ENCODE measurements at regions of chr2 and their contacts with region 1.

Region 1: GRCh38 chr2:23824777-23825212 is 102.1 kb downstream of the ATAD2B start:
- DNase-seq: peak; percentile 34
- ATAC-seq: peak; percentile 75
- H3K4me3 ChIP-seq: no peak overlapping the region
- H3K27ac ChIP-seq: no peak overlapping the region; the same call in 1 of the 2 replicates
- H3K4me1 ChIP-seq: peaks cover 14% of the 10 kb centered on the region
- H3K27me3 ChIP-seq: no peaks in the 10 kb centered on the region
- CTCF ChIP-seq: peak; percentile 59 to 67 (median 64)
- EP300 ChIP-seq: no peak
- POLR2A ChIP-seq: no peak
- RAD21 ChIP-seq: peak; percentile 79

Region 2: GRCh38 chr2:23835988-23836387 is 11.2 kb after region 1 on chr2:
- CTCF ChIA-PET with region 1: interaction called, 17 read pairs
- POLR2A ChIA-PET with region 1: interaction called, 5 read pairs
- RAD21 ChIA-PET with region 1: interaction called, 5 read pairs
- SMC1A ChIA-PET with region 1: interaction called, 14 read pairs
- in situ Hi-C with region 1: no loop called
- intact Hi-C with region 1: no loop called
- DNase-seq: no peak
- ATAC-seq: no peak
- H3K4me3 ChIP-seq: no peak overlapping the region
- H3K27ac ChIP-seq: no peak overlapping the region
- H3K4me1 ChIP-seq: no peaks in the 10 kb centered on the region
- H3K27me3 ChIP-seq: no peaks in the 10 kb centered on the region
- CTCF ChIP-seq: no peak
- EP300 ChIP-seq: no peak
- POLR2A ChIP-seq: no peak
- RAD21 ChIP-seq: no peak

Region 3: GRCh38 chr2:23859983-23860382 is 35.2 kb after region 1 on chr2:
- CTCF ChIA-PET with region 1: interaction called, 13 read pairs
- POLR2A ChIA-PET with region 1: no interaction called
- RAD21 ChIA-PET with region 1: interaction called, 4 read pairs
- SMC1A ChIA-PET with region 1: interaction called, 7 read pairs
- in situ Hi-C with region 1: no loop called
- intact Hi-C with region 1: no loop called
- DNase-seq: no peak
- ATAC-seq: no peak
- H3K4me3 ChIP-seq: no peak overlapping the region
- H3K27ac ChIP-seq: no peak overlapping the region
- H3K4me1 ChIP-seq: peaks cover 10% of the 10 kb centered on the region
- H3K27me3 ChIP-seq: no peaks in the 10 kb centered on the region
- CTCF ChIP-seq: no peak
- EP300 ChIP-seq: no peak
- POLR2A ChIP-seq: no peak
- RAD21 ChIP-seq: no peak

Region 4: GRCh38 chr2:24046930-24047702 is 222.3 kb after region 1 on chr2 and contains the start of gene WDCP:
- CTCF ChIA-PET with region 1: interaction called, 12 read pairs
- POLR2A ChIA-PET with region 1: interaction called, 4 read pairs
- RAD21 ChIA-PET with region 1: interaction called, 9 read pairs
- SMC1A ChIA-PET with region 1: interaction called, 3 read pairs
- in situ Hi-C with region 1: no loop called
- intact Hi-C with region 1: no loop called
- DNase-seq: peak; percentile 97
- ATAC-seq: peak; percentile 100
- H3K4me3 ChIP-seq: peak within 1 kb of the TSS; percentile 78
- H3K27ac ChIP-seq: peak within 1 kb of the TSS; percentile 20; the same call in 1 of the 2 replicates
- H3K4me1 ChIP-seq: peaks cover 11% of the 10 kb centered on the region
- H3K27me3 ChIP-seq: peaks cover 0 to 5% of the 10 kb centered on the region in 2 experiments; a peak in 3 of 4 replicates
- CTCF ChIP-seq: no peak
- EP300 ChIP-seq: no peak
- POLR2A ChIP-seq: peak; percentile 94
- RAD21 ChIP-seq: no peak
- polyA plus RNA-seq, gene WDCP: 5.5 to 6.1 TPM

Region 5: DNA sequence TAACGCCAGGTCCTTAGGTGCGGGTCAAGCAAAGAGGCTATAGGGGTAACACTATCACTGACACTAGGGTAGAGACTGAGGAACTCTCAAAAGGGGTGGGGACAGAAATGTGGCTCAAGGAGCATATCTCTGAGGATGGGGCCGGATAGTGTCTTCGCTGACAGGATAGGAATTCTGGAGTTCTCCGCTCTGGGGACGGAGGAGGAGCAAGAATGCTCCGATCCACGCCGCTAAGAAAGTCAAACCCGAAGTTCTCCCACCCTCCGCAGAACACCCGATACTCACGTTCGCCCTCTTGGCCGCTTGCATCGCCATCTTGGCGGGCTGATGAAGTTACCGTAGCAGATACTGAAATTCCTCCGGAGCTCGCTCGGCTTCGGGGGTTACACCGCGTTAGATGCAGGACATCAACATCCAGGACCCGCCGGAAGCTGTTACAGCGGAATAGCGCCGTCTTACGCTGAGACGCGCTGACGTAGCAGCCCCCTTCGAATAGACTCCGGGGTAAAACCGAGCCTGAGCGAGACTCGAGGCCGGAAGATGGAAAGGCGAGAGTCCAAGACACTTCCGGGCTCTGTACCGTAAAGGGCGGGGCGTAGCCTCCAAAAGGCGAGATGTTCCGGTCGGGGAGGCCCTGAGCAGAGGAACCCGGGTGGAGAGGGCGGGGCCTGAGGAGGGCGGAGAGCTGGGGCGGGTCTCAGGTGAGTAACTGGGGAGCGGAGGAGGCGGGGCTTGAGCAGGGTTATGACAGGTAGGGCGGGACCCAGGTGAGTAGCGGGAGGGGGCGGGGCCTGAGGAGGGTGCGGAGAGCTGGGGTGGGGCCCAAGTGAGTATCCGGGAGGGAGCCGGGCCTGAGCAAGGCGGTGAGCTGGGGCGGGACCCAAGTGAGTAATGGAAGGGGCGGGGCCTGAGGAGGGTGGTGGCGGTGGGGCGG is 251.4 kb after region 1 on chr2 and contains the start of gene SF3B6:
- CTCF ChIA-PET with region 1: interaction called, 105 read pairs
- POLR2A ChIA-PET with region 1: interaction called, 3 read pairs
- RAD21 ChIA-PET with region 1: interaction called, 16 read pairs
- SMC1A ChIA-PET with region 1: interaction called, 13 read pairs
- in situ Hi-C with region 1: no loop called
- intact Hi-C with region 1: no loop called
- DNase-seq: peak; percentile 98
- ATAC-seq: peak; percentile 95
- H3K4me3 ChIP-seq: peak within 1 kb of the TSS; percentile 89
- H3K27ac ChIP-seq: peak within 1 kb of the TSS; percentile 85
- H3K4me1 ChIP-seq: peaks cover 9% of the 10 kb centered on the region
- H3K27me3 ChIP-seq: no peaks in the 10 kb centered on the region
- CTCF ChIP-seq: no peak
- EP300 ChIP-seq: peak in 1 of 2 experiments; percentile 27; a peak in 1 of 4 replicates
- POLR2A ChIP-seq: peak; percentile 94
- RAD21 ChIP-seq: no peak
- polyA plus RNA-seq, gene SF3B6: 538 to 584 TPM

Region 6: GRCh38 chr2:24175631-24176187 is 350.9 kb after region 1 on chr2:
- CTCF ChIA-PET with region 1: interaction called, 10 read pairs
- POLR2A ChIA-PET with region 1: no interaction called
- RAD21 ChIA-PET with region 1: no interaction called
- SMC1A ChIA-PET with region 1: interaction called, 4 read pairs
- in situ Hi-C with region 1: no loop called
- intact Hi-C with region 1: no loop called
- DNase-seq: no peak
- ATAC-seq: no peak
- H3K4me3 ChIP-seq: no peak overlapping the region
- H3K27ac ChIP-seq: no peak overlapping the region
- H3K4me1 ChIP-seq: no peaks in the 10 kb centered on the region
- H3K27me3 ChIP-seq: no peaks in the 10 kb centered on the region
- CTCF ChIP-seq: no peak
- EP300 ChIP-seq: no peak
- POLR2A ChIP-seq: no peak
- RAD21 ChIP-seq: no peak

Measured in GM12878 (cell line).